Calu3 (cell line): ENCODE measurements at regions of chr3 and their contacts with region 1.

Region 1: DNA sequence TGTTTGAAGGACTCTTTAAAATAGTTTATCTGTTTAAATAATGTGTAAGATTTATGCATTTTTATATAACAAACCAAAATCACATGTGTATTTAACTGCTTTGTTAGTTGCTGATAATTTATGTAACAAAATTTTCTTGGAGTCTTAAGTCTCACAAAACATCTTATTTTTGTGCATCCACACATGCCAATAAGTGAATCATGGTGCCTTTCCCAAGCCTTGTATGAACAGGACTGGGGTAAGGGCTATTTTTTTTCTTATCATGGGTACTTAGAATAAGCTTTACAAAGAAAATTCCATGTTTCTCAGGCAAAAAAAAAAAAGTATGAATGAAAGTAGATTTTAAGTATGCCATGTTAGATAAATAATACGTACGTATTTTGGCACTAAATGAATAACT is 132.9 kb upstream of the LRRFIP2 start:
- DNase-seq: no peak
- H3K4me3 Mint-ChIP-seq: no peak overlapping the region
- H3K27ac Mint-ChIP-seq: no peak overlapping the region
- H3K4me1 Mint-ChIP-seq: no peaks in the 10 kb centered on the region
- H3K27me3 Mint-ChIP-seq: no peaks in the 10 kb centered on the region
- CTCF ChIP-seq: no peak

Region 2: DNA sequence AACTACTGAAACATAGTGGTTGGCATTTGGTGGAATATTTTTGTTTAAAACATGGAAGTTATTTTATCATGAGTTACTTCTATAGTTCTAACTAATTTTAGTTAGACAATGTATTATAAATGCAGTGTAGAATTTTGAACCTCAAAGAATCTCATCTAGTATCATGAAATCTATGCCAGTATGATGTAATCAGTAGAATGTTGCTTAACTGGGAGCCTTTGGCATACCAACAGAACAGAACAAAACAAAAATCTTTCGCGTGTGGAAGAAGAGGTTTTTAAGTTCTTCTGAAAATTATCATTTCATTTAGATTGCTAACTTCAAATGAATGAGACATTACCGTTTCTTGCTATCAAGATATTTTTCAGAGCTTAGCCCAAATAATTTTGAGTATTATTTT is 34.6 kb before region 1 on chr3:
- CTCF ChIA-PET with region 1: interaction called, 11 read pairs
- intact Hi-C with region 1: no loop called
- DNase-seq: no peak
- H3K4me3 Mint-ChIP-seq: no peak overlapping the region
- H3K27ac Mint-ChIP-seq: no peak overlapping the region
- H3K4me1 Mint-ChIP-seq: no peaks in the 10 kb centered on the region
- H3K27me3 Mint-ChIP-seq: no peaks in the 10 kb centered on the region
- CTCF ChIP-seq: no peak